Activated CD4-positive, alpha-beta T cell treated with anti-CD3 and anti-CD28 coated beads, Interleukin-2, amount 10 ng/mL, durations not matched to agents 24 days and 14 days (primary cell): ENCODE measurements at regions of chr1 and their contacts with region 1.

Region 1: GRCh38 chr1:19390901-19391595 is 78.9 kb downstream of the SLC66A1 start:
- DNase-seq: peak; percentile 88
- H3K4me3 Mint-ChIP-seq: peak overlapping the region; percentile 81
- H3K27ac Mint-ChIP-seq: peak overlapping the region; percentile 94
- H3K4me1 Mint-ChIP-seq: peaks cover 49% of the 10 kb centered on the region
- H3K27me3 Mint-ChIP-seq: no peaks in the 10 kb centered on the region

Region 2: DNA sequence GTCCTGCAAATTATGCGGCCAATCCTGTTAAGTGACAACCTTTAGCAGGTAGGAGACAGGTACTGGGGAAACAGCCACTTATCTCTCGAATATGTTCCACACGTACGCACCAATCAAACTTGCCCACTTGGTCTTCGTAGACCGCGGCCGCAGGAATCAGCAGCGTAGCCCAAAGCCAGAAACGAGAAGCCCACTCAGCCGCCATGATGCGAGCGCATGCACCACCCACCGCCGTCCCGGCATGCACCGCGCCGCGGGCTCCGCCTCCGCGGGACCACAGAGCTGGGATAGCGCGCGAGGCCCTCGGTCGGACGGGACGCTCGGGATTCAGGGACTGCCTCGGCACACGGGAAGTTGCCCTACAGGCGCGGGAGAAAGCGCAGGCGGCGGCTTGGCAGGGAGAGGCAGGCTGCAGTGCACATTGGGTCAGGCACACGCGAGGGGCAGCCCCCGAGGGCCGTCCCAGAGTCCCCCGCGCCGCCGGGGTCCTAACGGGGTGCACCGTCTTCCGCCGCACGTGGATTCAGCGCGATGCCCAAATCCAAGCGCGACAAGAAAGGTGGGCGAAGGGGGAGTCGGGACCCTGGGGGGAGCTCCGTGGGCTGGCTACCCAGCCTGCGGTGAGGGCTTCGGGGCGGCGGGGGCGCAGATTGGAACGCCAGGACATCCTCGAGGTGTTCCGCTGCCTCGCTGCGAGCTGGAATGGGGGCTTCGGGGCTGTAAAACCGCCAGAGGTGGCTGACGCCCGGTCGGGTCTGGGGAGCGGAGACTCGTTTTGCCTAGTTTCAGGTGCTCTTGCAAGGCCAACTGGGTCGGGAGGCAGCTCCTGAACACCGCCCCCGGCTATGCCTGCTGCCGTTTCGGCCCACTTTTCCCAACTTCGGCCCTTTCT is 139.5 kb before region 1 on chr1 and contains the starts of genes EMC1 and MRTO4:
- intact Hi-C with region 1: loop called (anchors 1 kb)
- DNase-seq: peak; percentile 98
- H3K4me3 Mint-ChIP-seq: peak within 1 kb of the TSS; percentile 100
- H3K27ac Mint-ChIP-seq: peak within 1 kb of the TSS; percentile 98
- H3K4me1 Mint-ChIP-seq: peaks cover 24% of the 10 kb centered on the region
- H3K27me3 Mint-ChIP-seq: no peaks in the 10 kb centered on the region
- total RNA-seq, gene EMC1: 67.9 and 71.1 TPM in 2 replicates
- total RNA-seq, gene MRTO4: 132 and 135 TPM in 2 replicates

Region 3: DNA sequence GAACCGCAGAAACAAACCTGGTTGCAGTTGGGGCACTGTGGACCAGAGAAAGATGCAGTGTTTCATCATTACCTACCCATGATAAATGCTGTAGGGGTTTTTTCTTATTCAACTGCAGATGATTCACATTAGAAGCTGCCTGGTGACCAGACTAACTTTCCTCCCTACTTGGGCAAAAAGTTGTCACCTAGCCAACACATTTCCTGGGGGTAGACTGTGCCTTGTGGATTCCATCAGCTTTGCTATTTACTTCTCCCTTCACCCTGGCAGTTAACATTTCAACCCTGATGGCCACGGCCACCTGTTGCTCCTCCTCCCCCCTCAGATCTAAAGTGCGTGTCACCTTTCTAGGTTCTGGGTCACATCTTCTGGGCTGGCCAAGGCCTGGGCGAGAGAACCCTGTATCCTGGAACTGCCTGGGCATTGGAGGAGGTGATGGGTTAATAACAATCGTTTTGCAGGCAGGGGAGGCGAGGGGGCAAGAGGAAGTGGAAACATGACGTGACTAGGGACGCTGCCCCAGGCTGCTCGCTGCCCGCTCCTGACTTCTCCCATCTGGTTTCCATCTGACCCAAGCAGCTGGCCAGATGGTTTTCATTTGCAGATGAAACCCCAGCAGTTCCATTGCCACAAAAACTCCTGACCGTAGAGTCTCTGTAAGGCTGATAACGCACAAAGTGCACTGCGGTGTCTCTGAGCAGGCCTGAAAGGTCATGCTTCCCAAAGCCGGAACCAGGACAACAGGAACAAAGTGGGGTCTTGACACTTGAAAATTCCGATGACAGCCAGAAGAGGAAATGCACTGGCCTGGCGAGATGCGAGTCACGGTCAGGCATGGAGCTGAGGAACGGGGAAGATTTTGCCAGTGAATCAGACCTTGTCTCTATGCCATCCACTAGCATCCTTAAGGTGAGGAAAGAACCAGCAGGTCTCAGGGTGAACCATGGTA is 57.7 kb after region 1 on chr1:
- intact Hi-C with region 1: loop called (anchors 1 kb)
- DNase-seq: no peak
- H3K4me3 Mint-ChIP-seq: peak overlapping the region; percentile 58
- H3K27ac Mint-ChIP-seq: peak overlapping the region; percentile 90
- H3K4me1 Mint-ChIP-seq: peaks cover 68% of the 10 kb centered on the region
- H3K27me3 Mint-ChIP-seq: no peaks in the 10 kb centered on the region

Region 4: DNA sequence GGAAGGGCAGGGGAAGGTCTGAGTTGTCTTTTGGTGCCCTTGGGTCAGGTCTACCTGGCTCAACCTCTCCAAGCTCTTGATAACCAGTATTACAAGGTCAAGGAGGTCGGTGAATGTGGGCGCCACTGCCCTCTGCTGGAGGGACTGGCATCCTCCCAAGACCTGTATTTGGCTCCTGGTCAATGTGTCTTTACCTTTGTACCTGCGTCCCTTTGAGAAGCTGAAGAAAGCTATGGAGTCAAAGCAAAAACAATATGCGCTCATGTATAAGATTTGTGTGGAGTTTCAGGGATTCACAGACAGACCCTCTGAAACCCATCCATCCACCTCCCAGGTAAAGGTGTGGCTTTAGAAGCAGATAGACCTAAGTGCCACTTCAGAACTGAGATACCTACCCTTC is 191.3 kb after region 1 on chr1:
- intact Hi-C with region 1: loop called (anchors 1 kb)
- DNase-seq: peak; percentile 92
- H3K4me3 Mint-ChIP-seq: no peak overlapping the region
- H3K27ac Mint-ChIP-seq: no peak overlapping the region
- H3K4me1 Mint-ChIP-seq: peaks cover 5% of the 10 kb centered on the region
- H3K27me3 Mint-ChIP-seq: peaks cover 2% of the 10 kb centered on the region

Region 5: GRCh38 chr1:19596714-19597495 is 205.9 kb after region 1 on chr1:
- intact Hi-C with region 1: loop called (anchors 5 kb)
- DNase-seq: peak; percentile 99
- H3K4me3 Mint-ChIP-seq: peak overlapping the region; percentile 99
- H3K27ac Mint-ChIP-seq: peak overlapping the region; percentile 100
- H3K4me1 Mint-ChIP-seq: peaks cover 38% of the 10 kb centered on the region
- H3K27me3 Mint-ChIP-seq: peaks cover 6% of the 10 kb centered on the region

Region 6: GRCh38 chr1:19651141-19651737 is 260.2 kb after region 1 on chr1:
- intact Hi-C with region 1: loop called (anchors 1 kb)
- DNase-seq: peak; percentile 83
- H3K4me3 Mint-ChIP-seq: no peak overlapping the region
- H3K27ac Mint-ChIP-seq: no peak overlapping the region
- H3K4me1 Mint-ChIP-seq: peaks cover 31% of the 10 kb centered on the region
- H3K27me3 Mint-ChIP-seq: no peaks in the 10 kb centered on the region